ENCODE measurements at regions of chr10 and their contacts with region 1.

Region 1: GRCh38 chr10:57849691-57850357 is 417.9 kb downstream of the IPMK start:
- DNase-seq: no peak
- H3K4me3 ChIP-seq: no peak overlapping the region
- H3K27ac ChIP-seq: no peak overlapping the region
- H3K4me1 ChIP-seq: no peaks in the 10 kb centered on the region
- H3K27me3 ChIP-seq: no peaks in the 10 kb centered on the region
- CTCF ChIP-seq: peak in 2 of 3 experiments; percentile 21 to 39

Region 2: GRCh38 chr10:57579926-57580325 is 269.9 kb before region 1 on chr10:
- intact Hi-C with region 1: loop called (anchors 5 kb)
- DNase-seq: no peak
- H3K4me3 ChIP-seq: no peak overlapping the region
- H3K27ac ChIP-seq: no peak overlapping the region
- H3K4me1 ChIP-seq: no peaks in the 10 kb centered on the region
- H3K27me3 ChIP-seq: no peaks in the 10 kb centered on the region
- CTCF ChIP-seq: peak in 2 of 3 experiments; percentile 22 to 49

Measured in ascending aorta (tissue), 2 donors.